ENCODE measurements at regions of chr2 and their contacts with region 1.

Region 1: GRCh38 chr2:50143822-50144575 is 887.9 kb downstream of the NRXN1 start:
- DNase-seq: peak; percentile 4 to 37
- H3K4me3 ChIP-seq: peak overlapping the region; percentile 54
- H3K27ac ChIP-seq: no peak overlapping the region
- H3K4me1 ChIP-seq: no peaks in the 10 kb centered on the region
- H3K27me3 ChIP-seq: no peaks in the 10 kb centered on the region
- CTCF ChIP-seq: peak; percentile 83

Region 2: DNA sequence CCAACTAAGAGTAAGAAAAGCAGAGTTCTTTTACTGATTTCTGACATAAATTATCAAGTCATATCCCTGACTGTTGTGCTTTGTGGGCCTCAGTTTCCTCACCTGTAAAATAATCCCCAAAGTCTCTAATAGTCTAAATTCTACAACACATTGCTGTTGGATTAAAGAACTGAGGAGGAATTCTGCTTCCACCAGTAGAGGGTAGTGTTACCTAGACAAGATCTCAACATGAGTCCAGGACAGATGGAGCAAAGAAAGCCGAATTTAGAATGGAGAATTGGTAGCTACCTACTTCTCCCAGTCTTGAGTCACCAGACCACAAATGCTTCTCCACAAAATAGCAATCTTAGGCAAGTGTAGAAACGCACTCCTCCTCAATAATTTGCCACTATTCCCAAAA is 527.2 kb before region 1 on chr2:
- CTCF ChIA-PET with region 1: interaction called, 3 read pairs
- POLR2A ChIA-PET with region 1: no interaction called
- intact Hi-C with region 1: loop called (anchors 5 kb)
- DNase-seq: no peak
- H3K4me3 ChIP-seq: no peak overlapping the region
- H3K27ac ChIP-seq: no peak overlapping the region
- H3K4me1 ChIP-seq: no peaks in the 10 kb centered on the region
- H3K27me3 ChIP-seq: peaks cover 6% of the 10 kb centered on the region; the same call in 1 of the 2 replicates
- CTCF ChIP-seq: peak; percentile 68

Region 3: DNA sequence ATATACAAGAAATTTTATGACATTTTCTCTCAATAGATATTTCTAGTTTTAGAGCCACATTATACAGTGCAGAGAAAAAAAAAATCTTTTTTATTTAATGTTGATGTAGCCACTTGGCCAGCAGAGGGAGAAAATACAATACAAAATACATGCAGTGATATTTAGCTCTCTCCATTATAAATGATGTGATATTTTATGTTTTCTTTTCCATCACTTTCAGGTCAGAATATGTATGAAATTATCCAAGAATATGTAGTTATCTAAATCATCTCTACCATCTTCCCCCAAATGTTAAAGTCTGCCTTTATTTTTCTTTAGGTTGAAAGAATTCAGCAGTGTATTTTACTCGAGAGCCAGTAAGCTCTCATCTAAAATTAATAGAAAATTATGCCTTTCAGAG is 456.1 kb before region 1 on chr2:
- CTCF ChIA-PET with region 1: no interaction called
- POLR2A ChIA-PET with region 1: interaction called, 5 read pairs
- intact Hi-C with region 1: loop called (anchors 1 kb)
- DNase-seq: no peak
- H3K4me3 ChIP-seq: no peak overlapping the region
- H3K27ac ChIP-seq: no peak overlapping the region
- H3K4me1 ChIP-seq: no peaks in the 10 kb centered on the region
- H3K27me3 ChIP-seq: no peaks in the 10 kb centered on the region
- CTCF ChIP-seq: peak; percentile 69

Region 4: DNA sequence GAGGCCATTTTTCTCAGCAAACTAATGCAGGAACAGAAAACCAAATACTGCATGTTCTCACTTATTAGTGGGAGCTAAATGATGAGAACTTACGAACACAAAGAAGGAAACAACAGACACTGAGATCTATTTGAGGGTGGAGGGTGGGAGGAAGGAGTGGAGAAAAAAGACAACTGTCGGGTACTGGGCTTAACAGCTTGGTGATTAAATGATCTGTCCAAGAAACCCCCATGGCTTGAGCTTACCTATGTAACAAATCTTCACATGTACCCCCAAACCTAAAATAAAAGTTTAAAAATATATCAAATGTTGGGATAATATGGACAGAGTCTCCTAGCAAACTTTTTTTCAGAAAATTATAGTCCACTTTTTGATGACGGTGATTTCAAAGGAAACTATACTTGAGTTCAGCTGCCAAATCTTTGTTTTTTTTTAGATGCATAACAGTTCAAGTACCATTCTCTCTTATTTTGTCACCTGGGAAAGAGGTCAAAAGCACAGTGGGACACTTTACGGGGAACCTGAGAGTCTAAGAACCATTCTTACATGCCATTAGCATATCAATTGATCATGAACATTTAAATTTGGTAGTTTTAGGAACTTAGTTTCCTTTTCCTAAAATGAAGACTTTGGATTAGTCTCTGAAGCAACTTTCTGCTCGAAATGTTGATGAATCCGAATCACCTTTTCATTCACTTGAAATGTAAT is 52.9 kb after region 1 on chr2:
- CTCF ChIA-PET with region 1: no interaction called
- POLR2A ChIA-PET with region 1: no interaction called
- intact Hi-C with region 1: no loop called
- DNase-seq: no peak
- H3K4me3 ChIP-seq: no peak overlapping the region
- H3K27ac ChIP-seq: no peak overlapping the region
- H3K4me1 ChIP-seq: no peaks in the 10 kb centered on the region
- H3K27me3 ChIP-seq: no peaks in the 10 kb centered on the region
- CTCF ChIP-seq: no peak

Region 5: GRCh38 chr2:50851886-50852285 is 707.9 kb after region 1 on chr2:
- CTCF ChIA-PET with region 1: no interaction called
- POLR2A ChIA-PET with region 1: no interaction called
- intact Hi-C with region 1: no loop called
- DNase-seq: no peak
- H3K4me3 ChIP-seq: no peak overlapping the region
- H3K27ac ChIP-seq: no peak overlapping the region
- H3K4me1 ChIP-seq: no peaks in the 10 kb centered on the region
- H3K27me3 ChIP-seq: no peaks in the 10 kb centered on the region
- CTCF ChIP-seq: no peak